Transverse colon (tissue), 4 donors: ENCODE measurements at regions of chr10 and their contacts with region 1.

Region 1: GRCh38 chr10:99711129-99711719 is 20.7 kb downstream of the COX15 start:
- DNase-seq: peak; percentile 35
- H3K4me3 ChIP-seq: no peak overlapping the region
- H3K27ac ChIP-seq: no peak overlapping the region
- H3K4me1 ChIP-seq: peaks cover 0 to 25% (median 0%) of the 10 kb centered on the region in 4 donors
- H3K27me3 ChIP-seq: no peaks in the 10 kb centered on the region
- CTCF ChIP-seq: peak; percentile 40 to 51 (median 47)
- EP300 ChIP-seq: no peak
- POLR2A ChIP-seq: no peak

Region 2: DNA sequence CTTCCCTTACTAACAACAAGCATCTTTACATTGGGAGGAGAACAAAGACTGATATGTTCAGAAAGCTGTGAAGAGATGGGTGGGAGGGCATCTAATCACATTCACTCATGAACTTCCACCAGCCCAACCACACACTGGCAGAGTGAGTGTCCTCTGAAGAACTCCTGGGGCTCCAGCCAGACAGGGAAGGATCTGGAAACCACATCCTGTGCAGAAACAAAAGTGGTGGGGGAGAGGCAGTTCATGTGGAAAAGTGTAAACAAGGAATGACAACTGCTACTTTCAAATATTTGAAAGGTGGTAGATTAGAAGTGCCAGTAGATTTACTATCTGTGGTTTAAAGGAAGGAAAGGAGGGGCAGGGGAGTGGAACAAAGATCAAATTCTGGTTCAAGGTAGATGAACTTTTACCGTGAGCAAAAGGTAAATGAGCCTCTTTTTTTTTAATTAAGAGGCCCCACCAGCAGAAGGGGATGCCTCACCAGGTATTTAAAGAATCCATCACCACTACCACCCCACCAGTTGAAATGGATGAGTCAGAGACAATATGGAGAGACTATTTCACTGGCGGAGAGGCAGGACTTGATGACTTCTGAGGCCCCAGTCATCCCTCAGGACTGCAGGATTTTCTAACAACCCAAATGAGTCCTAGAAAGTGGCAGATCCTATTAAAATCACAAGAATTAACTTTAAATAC is 315.3 kb before region 1 on chr10:
- in situ Hi-C with region 1: loop called in 1 of 4 experiments (anchors 25 kb)
- intact Hi-C with region 1: no loop called
- DNase-seq: no peak
- H3K4me3 ChIP-seq: no peak overlapping the region
- H3K27ac ChIP-seq: no peak overlapping the region
- H3K4me1 ChIP-seq: peaks cover 0 to 3% (median 1%) of the 10 kb centered on the region in 4 donors
- H3K27me3 ChIP-seq: no peaks in the 10 kb centered on the region
- CTCF ChIP-seq: no peak
- EP300 ChIP-seq: no peak
- POLR2A ChIP-seq: no peak

Region 3: DNA sequence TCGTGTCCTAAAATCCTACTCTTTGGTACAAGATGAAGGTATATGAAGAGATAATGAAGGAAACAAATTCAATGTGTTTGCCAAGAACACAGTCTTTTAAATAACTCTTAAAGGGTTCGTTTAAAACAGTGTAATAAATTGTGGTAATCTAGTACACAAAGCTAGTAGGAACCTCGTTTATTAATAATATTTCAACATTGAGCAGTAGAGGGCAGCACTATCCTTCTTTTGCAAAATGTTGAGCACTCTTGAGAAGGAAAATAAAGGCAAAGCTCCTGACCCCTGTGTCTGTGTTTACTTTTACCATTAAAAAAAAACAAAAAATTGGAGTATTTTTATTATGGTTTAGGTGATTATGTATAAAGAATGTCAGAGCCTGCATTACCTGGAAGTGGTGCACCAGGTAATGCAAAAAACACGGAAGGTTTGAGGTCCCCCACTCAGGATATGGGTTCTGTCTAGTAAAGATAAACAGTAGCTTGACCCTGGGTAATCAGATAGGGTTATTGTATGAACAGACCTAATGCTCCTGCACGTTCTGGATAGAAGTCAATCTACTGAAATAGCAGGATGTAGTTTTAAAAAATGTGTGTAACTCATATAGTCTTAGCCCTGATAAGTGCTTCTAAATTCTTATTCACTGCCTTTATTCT is 275.1 kb before region 1 on chr10:
- in situ Hi-C with region 1: no loop called
- intact Hi-C with region 1: loop called (anchors 5 kb)
- DNase-seq: no peak
- H3K4me3 ChIP-seq: no peak overlapping the region
- H3K27ac ChIP-seq: peak overlapping the region; percentile 48 to 56 (median 54)
- H3K4me1 ChIP-seq: peaks cover 4 to 46% (median 15%) of the 10 kb centered on the region in 4 donors
- H3K27me3 ChIP-seq: no peaks in the 10 kb centered on the region
- CTCF ChIP-seq: peak; percentile 43 to 55 (median 50)
- EP300 ChIP-seq: no peak
- POLR2A ChIP-seq: no peak

Region 4: GRCh38 chr10:99560277-99561126 is 150.7 kb before region 1 on chr10:
- in situ Hi-C with region 1: loop called in 1 of 4 experiments (anchors 10 kb)
- intact Hi-C with region 1: no loop called
- DNase-seq: peak; percentile 59
- H3K4me3 ChIP-seq: no peak overlapping the region
- H3K27ac ChIP-seq: no peak overlapping the region
- H3K4me1 ChIP-seq: peaks cover 0 to 3% (median 0%) of the 10 kb centered on the region in 4 donors
- H3K27me3 ChIP-seq: no peaks in the 10 kb centered on the region
- CTCF ChIP-seq: peak; percentile 80 to 83 (median 83)
- EP300 ChIP-seq: no peak
- POLR2A ChIP-seq: no peak

Region 5: GRCh38 chr10:99629625-99629978 is 81.6 kb before region 1 on chr10:
- in situ Hi-C with region 1: loop called in 1 of 4 experiments (anchors 5 kb)
- intact Hi-C with region 1: no loop called
- DNase-seq: no peak
- H3K4me3 ChIP-seq: no peak overlapping the region
- H3K27ac ChIP-seq: no peak overlapping the region
- H3K4me1 ChIP-seq: no peaks in the 10 kb centered on the region
- H3K27me3 ChIP-seq: no peaks in the 10 kb centered on the region
- CTCF ChIP-seq: no peak
- EP300 ChIP-seq: no peak
- POLR2A ChIP-seq: no peak